ENCODE measurements at regions of chr17 and their contacts with region 1.

Region 1: DNA sequence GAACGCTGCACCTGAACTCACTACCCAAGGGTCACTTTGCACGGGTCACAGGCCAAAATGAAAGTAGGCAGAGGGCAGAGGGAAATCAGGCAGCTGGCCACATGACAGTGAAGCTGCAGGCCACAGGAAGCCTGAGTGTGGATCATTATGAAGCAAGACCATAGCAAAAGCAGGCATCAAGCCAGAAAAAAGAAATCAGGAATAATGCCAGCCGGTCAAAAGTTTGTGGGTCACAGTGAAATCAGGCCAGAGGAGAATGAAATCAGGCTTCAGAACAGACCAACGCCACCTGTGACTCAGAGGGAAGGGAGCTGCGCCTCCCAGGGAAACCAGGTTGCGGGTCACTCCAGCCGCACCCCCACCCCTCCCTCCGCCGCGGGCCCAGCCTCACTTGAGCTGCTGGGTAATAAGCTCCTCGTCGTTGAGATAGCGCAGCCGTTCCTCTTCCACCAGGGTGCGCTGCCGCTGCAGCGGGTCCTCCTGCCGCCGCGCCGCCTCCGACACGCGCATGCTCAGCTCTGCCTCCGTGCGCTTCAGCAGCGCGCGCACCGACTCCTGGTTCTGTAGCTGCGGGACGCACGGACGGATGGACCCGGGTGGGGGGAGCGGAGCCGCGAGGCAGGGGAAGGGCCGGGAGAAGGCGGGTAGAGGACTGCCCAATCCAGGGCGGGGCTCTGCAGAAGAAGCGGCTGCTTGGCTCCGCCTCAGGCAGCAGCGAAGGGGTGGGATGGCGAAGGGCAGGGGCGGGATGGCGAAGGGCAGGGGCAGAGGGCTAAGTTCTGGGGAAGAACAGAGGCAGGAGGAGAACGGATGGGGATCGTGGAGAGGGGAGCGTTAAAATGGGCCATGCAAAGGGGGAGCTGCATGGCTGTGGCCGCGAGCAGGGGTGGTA is 47.7 kb downstream of the SRCIN1 start:
- DNase-seq: peak; percentile 94
- ATAC-seq: peak; percentile 92
- H3K4me3 ChIP-seq: peak overlapping the region; percentile 50; the same call in 1 of the 2 replicates
- H3K27ac ChIP-seq: peak overlapping the region; percentile 80
- H3K4me1 ChIP-seq: peaks cover 39% of the 10 kb centered on the region
- H3K27me3 ChIP-seq: no peaks in the 10 kb centered on the region
- CTCF ChIP-seq: peak; percentile 75

Region 2: DNA sequence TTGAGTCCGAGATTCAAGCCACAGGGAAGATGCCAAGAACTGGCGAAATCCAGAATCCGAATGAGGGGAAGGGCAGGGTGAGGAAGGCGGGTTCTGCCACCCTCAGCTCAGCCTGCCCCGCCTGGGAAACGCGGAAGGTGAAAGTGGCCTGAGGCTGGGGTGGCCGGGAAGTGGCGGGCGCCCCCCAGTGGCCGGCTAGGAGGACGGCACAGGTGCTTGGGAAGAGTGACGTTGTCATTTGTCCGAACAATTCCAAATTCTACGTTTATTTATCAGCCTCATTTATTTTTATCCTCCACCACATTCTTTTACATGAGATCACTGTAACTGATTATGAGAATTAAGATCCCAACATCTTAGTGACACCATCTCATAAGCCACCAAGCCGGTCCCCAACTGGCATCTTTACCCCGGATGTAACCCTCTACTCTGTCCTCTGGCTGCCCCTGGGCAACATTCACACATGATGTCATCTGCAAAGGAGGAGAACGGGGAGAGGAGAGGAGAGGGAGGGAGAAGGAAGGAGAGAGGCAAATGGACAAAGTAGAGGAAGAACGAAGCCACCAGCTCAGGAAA is 26.4 kb after region 1 on chr17:
- CTCF ChIA-PET with region 1: interaction called, 36 read pairs
- POLR2A ChIA-PET with region 1: no interaction called
- intact Hi-C with region 1: loop called (anchors 1 kb)
- DNase-seq: peak; percentile 59
- ATAC-seq: peak; percentile 76
- H3K4me3 ChIP-seq: peak overlapping the region; percentile 26; the same call in 1 of the 2 replicates
- H3K27ac ChIP-seq: no peak overlapping the region
- H3K4me1 ChIP-seq: peaks cover 31% of the 10 kb centered on the region
- H3K27me3 ChIP-seq: no peaks in the 10 kb centered on the region
- CTCF ChIP-seq: peak; percentile 90